HCT116 (cell line): ENCODE measurements at regions of chr5 and their contacts with region 1.

Region 1: GRCh38 chr5:17216176-17216973 is 1.1 kb upstream of the BASP1 start:
- DNase-seq: peak; percentile 34
- ATAC-seq: peak; percentile 85
- H3K4me3 ChIP-seq: no peak overlapping the region
- H3K27ac ChIP-seq: no peak overlapping the region
- H3K4me1 ChIP-seq: no peaks in the 10 kb centered on the region
- H3K27me3 ChIP-seq: peaks cover 4% of the 10 kb centered on the region; the same call in 1 of the 2 replicates
- CTCF ChIP-seq: peak; percentile 28 to 75 (median 73); a peak in 5 of 6 replicates
- POLR2A ChIP-seq: no peak
- RAD21 ChIP-seq: peak; percentile 67

Region 2: GRCh38 chr5:17000291-17000939 is 216.0 kb before region 1 on chr5:
- CTCF ChIA-PET with region 1: no interaction called
- POLR2A ChIA-PET with region 1: no interaction called
- RAD21 ChIA-PET with region 1: no interaction called
- intact Hi-C with region 1: no loop called
- DNase-seq: peak; percentile 52
- ATAC-seq: peak; percentile 90
- H3K4me3 ChIP-seq: peak overlapping the region in 1 of 2 experiments; percentile 21; a peak in 2 of 4 replicates
- H3K27ac ChIP-seq: peak overlapping the region; percentile 47; the same call in 1 of the 2 replicates
- H3K4me1 ChIP-seq: peaks cover 5 to 16% of the 10 kb centered on the region in 2 experiments; a peak in 3 of 4 replicates
- H3K27me3 ChIP-seq: no peaks in the 10 kb centered on the region
- CTCF ChIP-seq: no peak
- POLR2A ChIP-seq: no peak
- RAD21 ChIP-seq: no peak

Region 3: GRCh38 chr5:18281682-18282557 is 1065.5 kb after region 1 on chr5:
- CTCF ChIA-PET with region 1: no interaction called
- POLR2A ChIA-PET with region 1: no interaction called
- RAD21 ChIA-PET with region 1: no interaction called
- intact Hi-C with region 1: loop called (anchors 1 kb)
- DNase-seq: no peak
- ATAC-seq: no peak
- H3K4me3 ChIP-seq: no peak overlapping the region
- H3K27ac ChIP-seq: no peak overlapping the region
- H3K4me1 ChIP-seq: no peaks in the 10 kb centered on the region
- H3K27me3 ChIP-seq: no peaks in the 10 kb centered on the region
- CTCF ChIP-seq: peak in 1 of 3 experiments; percentile 29; a peak in 2 of 6 replicates
- POLR2A ChIP-seq: no peak
- RAD21 ChIP-seq: no peak

Region 4: GRCh38 chr5:18305297-18305924 is 1089.0 kb after region 1 on chr5:
- CTCF ChIA-PET with region 1: interaction called, 5 read pairs
- POLR2A ChIA-PET with region 1: no interaction called
- RAD21 ChIA-PET with region 1: no interaction called
- intact Hi-C with region 1: loop called (anchors 1 kb)
- DNase-seq: no peak
- ATAC-seq: no peak
- H3K4me3 ChIP-seq: no peak overlapping the region
- H3K27ac ChIP-seq: no peak overlapping the region
- H3K4me1 ChIP-seq: no peaks in the 10 kb centered on the region
- H3K27me3 ChIP-seq: no peaks in the 10 kb centered on the region
- CTCF ChIP-seq: peak in 2 of 3 experiments; percentile 31 to 39; a peak in 3 of 6 replicates
- POLR2A ChIP-seq: no peak
- RAD21 ChIP-seq: peak; percentile 34; the same call in 1 of the 2 replicates

Region 5: DNA sequence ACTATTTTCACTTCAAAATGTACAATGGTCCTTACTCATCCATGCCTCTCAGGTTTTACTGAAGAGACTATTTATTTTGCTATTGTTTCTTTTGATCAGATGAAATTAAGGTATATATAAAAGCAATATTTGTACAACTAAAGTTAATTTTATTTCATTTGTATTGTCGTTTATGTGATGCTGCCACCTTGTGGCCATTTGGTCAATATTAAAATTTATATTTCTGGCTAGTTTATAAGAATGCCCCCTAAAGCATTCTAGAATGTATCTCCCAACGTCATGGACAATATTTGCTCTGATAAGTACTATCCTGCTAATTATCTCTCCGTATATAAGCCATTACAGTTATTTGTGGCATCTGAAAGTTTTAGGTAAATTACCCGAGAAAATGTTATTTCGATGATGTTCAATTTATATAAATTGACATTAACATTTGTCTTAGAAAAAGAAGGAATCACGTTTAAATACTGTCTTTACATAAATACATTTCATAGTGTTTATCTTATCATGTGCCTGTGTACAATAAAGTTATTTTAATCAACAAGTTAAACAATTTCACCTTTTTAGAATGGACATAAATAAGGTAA is 1097.9 kb after region 1 on chr5:
- CTCF ChIA-PET with region 1: interaction called, 3 read pairs
- POLR2A ChIA-PET with region 1: no interaction called
- RAD21 ChIA-PET with region 1: no interaction called
- intact Hi-C with region 1: loop called (anchors 1 kb)
- DNase-seq: peak; percentile 6
- ATAC-seq: no peak
- H3K4me3 ChIP-seq: no peak overlapping the region
- H3K27ac ChIP-seq: no peak overlapping the region
- H3K4me1 ChIP-seq: no peaks in the 10 kb centered on the region
- H3K27me3 ChIP-seq: no peaks in the 10 kb centered on the region
- CTCF ChIP-seq: peak; percentile 6 to 54 (median 12); a peak in 3 of 6 replicates
- POLR2A ChIP-seq: no peak
- RAD21 ChIP-seq: peak; percentile 21; the same call in 1 of the 2 replicates

Region 6: DNA sequence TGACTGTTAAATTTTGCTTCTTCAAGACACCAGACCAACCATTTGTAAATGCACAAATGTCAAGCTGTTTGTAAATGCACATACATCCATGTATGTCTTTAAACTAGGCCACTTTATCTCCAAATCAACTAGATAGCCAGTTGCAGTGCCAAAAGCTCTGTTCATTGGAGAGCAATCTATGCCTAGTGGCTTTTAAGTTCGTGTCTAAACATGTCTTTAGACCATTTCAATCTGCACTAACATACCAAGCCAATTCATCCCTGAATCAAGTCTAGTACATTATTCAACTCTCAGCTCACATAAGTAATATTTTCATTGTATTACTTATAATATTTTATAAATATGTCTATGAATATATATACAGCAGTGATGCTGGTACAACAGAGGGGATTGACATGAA is 1785.7 kb after region 1 on chr5:
- CTCF ChIA-PET with region 1: no interaction called
- POLR2A ChIA-PET with region 1: no interaction called
- RAD21 ChIA-PET with region 1: no interaction called
- intact Hi-C with region 1: no loop called
- DNase-seq: no peak
- ATAC-seq: no peak
- H3K4me3 ChIP-seq: no peak overlapping the region
- H3K27ac ChIP-seq: no peak overlapping the region
- H3K4me1 ChIP-seq: no peaks in the 10 kb centered on the region
- H3K27me3 ChIP-seq: no peaks in the 10 kb centered on the region
- CTCF ChIP-seq: no peak
- POLR2A ChIP-seq: no peak
- RAD21 ChIP-seq: no peak